ENCODE measurements at regions of chr7 and their contacts with region 1.

Region 1: GRCh38 chr7:128031901-128032604 is 816 bp upstream of the LRRC4 start:
- H3K4me3 Mint-ChIP-seq: peak overlapping the region; percentile 81
- H3K27ac Mint-ChIP-seq: peak overlapping the region; percentile 32
- H3K4me1 Mint-ChIP-seq: peaks cover 33% of the 10 kb centered on the region
- H3K27me3 Mint-ChIP-seq: peaks cover 19% of the 10 kb centered on the region

Region 2: GRCh38 chr7:127717502-127718339 is 314.3 kb before region 1 on chr7:
- intact Hi-C with region 1: loop called (anchors 10 kb)
- H3K4me3 Mint-ChIP-seq: no peak overlapping the region
- H3K27ac Mint-ChIP-seq: no peak overlapping the region
- H3K4me1 Mint-ChIP-seq: peaks cover 9% of the 10 kb centered on the region
- H3K27me3 Mint-ChIP-seq: no peaks in the 10 kb centered on the region

Region 3: GRCh38 chr7:128209229-128210035 is 177.4 kb after region 1 on chr7:
- intact Hi-C with region 1: loop called (anchors 5 kb)
- H3K4me3 Mint-ChIP-seq: no peak overlapping the region
- H3K27ac Mint-ChIP-seq: peak overlapping the region; percentile 18
- H3K4me1 Mint-ChIP-seq: peaks cover 9% of the 10 kb centered on the region
- H3K27me3 Mint-ChIP-seq: peaks cover 26% of the 10 kb centered on the region

Region 4: DNA sequence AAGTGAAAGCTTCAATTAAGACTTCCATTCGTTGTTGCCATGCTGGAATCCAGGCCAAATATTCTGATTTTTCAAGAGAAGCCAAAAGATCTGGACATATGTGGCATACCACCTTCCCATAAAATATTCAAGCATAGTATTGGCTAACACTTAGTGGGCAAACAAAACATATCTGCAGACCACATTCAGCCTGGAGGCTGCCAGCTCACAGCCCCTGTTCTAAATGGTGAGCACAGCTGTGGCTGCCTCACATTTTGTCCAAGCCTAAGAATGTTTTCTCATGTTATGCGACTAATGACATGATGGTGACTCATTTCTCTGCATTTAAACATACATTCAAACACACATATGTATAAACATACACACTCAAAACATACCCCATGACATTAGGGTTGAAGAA is 696.5 kb after region 1 on chr7:
- intact Hi-C with region 1: no loop called
- H3K4me3 Mint-ChIP-seq: no peak overlapping the region
- H3K27ac Mint-ChIP-seq: no peak overlapping the region
- H3K4me1 Mint-ChIP-seq: peaks cover 11% of the 10 kb centered on the region
- H3K27me3 Mint-ChIP-seq: peaks cover 25% of the 10 kb centered on the region